ENCODE measurements at regions of chr3 and their contacts with region 1.

Region 1: DNA sequence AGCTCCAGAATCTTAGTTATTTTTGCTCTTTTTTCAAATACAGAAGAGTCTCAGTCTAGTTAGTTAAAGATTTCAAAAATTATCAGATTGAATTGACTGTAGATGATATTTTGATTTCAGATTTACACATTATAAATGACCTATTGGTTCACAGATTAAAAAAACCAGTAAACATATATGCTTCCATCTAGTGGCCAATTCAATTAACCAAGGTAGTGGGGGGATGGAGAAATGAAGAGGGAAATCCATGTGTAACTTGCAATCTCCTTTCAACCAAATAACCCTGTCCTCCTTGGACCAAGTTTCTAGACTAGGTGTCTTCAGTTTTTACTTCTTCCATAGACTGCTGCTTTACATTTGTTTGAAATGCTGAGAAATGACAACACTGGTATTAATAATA is 789.8 kb downstream of the ROBO1 start:
- DNase-seq: no peak
- ATAC-seq: peak; percentile 38; the same call in 1 of the 3 replicates
- H3K4me3 ChIP-seq: no peak overlapping the region
- H3K27ac ChIP-seq: no peak overlapping the region
- H3K4me1 ChIP-seq: no peaks in the 10 kb centered on the region
- H3K27me3 ChIP-seq: no peaks in the 10 kb centered on the region
- CTCF ChIP-seq: peak in 1 of 3 experiments; percentile 1; a peak in 1 of 6 replicates
- EP300 ChIP-seq: no peak
- POLR2A ChIP-seq: no peak
- RAD21 ChIP-seq: peak; percentile 10; the same call in 1 of the 2 replicates

Region 2: GRCh38 chr3:78659386-78659987 is 318.6 kb before region 1 on chr3:
- CTCF ChIA-PET with region 1: interaction called, 11 read pairs
- POLR2A ChIA-PET with region 1: no interaction called
- RAD21 ChIA-PET with region 1: interaction called, 4 read pairs
- SMC1A ChIA-PET with region 1: interaction called, 11 read pairs
- in situ Hi-C with region 1: no loop called
- intact Hi-C with region 1: no loop called
- DNase-seq: no peak
- ATAC-seq: peak; percentile 41
- H3K4me3 ChIP-seq: no peak overlapping the region
- H3K27ac ChIP-seq: no peak overlapping the region
- H3K4me1 ChIP-seq: no peaks in the 10 kb centered on the region
- H3K27me3 ChIP-seq: no peaks in the 10 kb centered on the region
- CTCF ChIP-seq: peak; percentile 29 to 61 (median 30); a peak in 5 of 6 replicates
- EP300 ChIP-seq: no peak
- POLR2A ChIP-seq: no peak
- RAD21 ChIP-seq: peak; percentile 80

Region 3: DNA sequence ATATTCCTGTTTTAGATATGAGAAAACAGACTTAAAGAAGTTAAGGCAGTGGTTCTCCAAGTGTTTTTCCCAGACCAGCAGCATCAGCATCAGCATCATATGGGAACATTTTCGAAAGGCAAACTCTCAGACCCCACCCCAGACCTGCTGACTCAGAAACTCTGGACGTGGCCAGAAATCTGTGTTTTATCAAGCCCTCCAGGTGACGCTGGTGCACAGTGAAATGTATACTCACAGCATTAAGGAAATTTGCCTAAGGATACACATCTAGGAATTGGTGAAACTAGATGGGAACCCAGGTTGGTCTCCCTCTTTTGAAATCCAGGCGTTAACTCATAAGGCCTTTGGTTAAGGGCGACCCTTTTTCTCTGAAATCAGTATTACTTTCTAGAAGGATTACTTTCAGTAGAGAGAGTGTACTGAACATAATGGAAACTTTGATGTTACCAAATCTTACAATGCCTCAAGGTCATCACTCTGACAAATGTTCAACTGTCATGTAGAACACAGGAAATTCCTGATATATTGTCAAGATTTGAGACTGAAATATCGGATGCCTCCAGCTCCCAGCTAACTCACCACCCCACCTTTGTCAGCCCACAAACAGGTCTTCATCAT is 120.4 kb before region 1 on chr3:
- CTCF ChIA-PET with region 1: interaction called, 4 read pairs
- POLR2A ChIA-PET with region 1: interaction called, 9 read pairs
- RAD21 ChIA-PET with region 1: interaction called, 6 read pairs
- SMC1A ChIA-PET with region 1: interaction called, 10 read pairs
- in situ Hi-C with region 1: no loop called
- intact Hi-C with region 1: no loop called
- DNase-seq: no peak
- ATAC-seq: peak; percentile 36; the same call in 1 of the 3 replicates
- H3K4me3 ChIP-seq: no peak overlapping the region
- H3K27ac ChIP-seq: no peak overlapping the region
- H3K4me1 ChIP-seq: no peaks in the 10 kb centered on the region
- H3K27me3 ChIP-seq: no peaks in the 10 kb centered on the region
- CTCF ChIP-seq: peak in 1 of 3 experiments; percentile 28; a peak in 2 of 6 replicates
- EP300 ChIP-seq: no peak
- POLR2A ChIP-seq: no peak
- RAD21 ChIP-seq: peak; percentile 28; the same call in 1 of the 2 replicates

Region 4: DNA sequence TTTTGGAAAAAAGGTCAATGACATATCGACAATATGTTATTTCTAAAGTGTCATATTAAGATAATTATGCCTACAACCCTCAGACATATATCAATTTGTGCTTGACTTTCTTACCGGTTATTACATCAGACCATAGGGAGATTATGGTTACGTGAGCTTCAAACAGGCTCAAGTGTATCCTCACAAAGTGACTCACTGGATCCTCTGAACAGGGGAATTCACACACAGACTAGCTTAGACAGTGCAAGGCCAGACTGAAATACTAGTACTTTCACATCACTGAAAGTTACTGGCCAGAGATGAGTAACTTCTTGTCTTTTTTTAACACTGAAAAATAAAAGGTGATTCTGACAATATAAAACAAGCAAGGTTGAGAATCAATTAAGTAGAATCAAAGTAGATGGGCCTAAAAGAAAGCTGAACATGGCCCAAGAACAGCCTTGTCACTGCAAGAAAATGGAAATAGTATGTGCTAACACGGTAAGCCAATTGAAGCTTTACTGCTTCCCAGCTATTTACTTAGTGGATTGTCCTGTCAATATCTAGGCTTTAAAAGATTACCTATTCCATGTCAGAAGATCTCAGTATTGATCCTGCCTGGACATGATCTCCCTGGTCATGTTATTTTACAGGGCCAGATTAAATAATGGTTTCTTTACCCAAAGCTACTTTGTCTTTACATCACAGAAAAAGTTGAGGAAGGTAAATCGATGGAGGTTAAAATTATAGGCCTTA is 58.8 kb before region 1 on chr3:
- CTCF ChIA-PET with region 1: no interaction called
- POLR2A ChIA-PET with region 1: interaction called, 3 read pairs
- RAD21 ChIA-PET with region 1: interaction called, 9 read pairs
- SMC1A ChIA-PET with region 1: interaction called, 29 read pairs
- in situ Hi-C with region 1: no loop called
- intact Hi-C with region 1: no loop called
- DNase-seq: peak; percentile 71
- ATAC-seq: peak; percentile 95
- H3K4me3 ChIP-seq: no peak overlapping the region
- H3K27ac ChIP-seq: peak overlapping the region; percentile 13; the same call in 1 of the 2 replicates
- H3K4me1 ChIP-seq: no peaks in the 10 kb centered on the region
- H3K27me3 ChIP-seq: no peaks in the 10 kb centered on the region
- CTCF ChIP-seq: no peak
- EP300 ChIP-seq: peak in 1 of 2 experiments; percentile 12; a peak in 1 of 4 replicates
- POLR2A ChIP-seq: no peak
- RAD21 ChIP-seq: no peak

Region 5: GRCh38 chr3:78988324-78988723 is 10.3 kb after region 1 on chr3:
- CTCF ChIA-PET with region 1: interaction called, 37 read pairs
- POLR2A ChIA-PET with region 1: no interaction called
- RAD21 ChIA-PET with region 1: interaction called, 19 read pairs
- SMC1A ChIA-PET with region 1: interaction called, 16 read pairs
- in situ Hi-C with region 1: no loop called
- intact Hi-C with region 1: no loop called
- DNase-seq: no peak
- ATAC-seq: no peak
- H3K4me3 ChIP-seq: no peak overlapping the region
- H3K27ac ChIP-seq: no peak overlapping the region
- H3K4me1 ChIP-seq: no peaks in the 10 kb centered on the region
- H3K27me3 ChIP-seq: no peaks in the 10 kb centered on the region
- CTCF ChIP-seq: peak in 1 of 3 experiments; percentile 32; a peak in 1 of 6 replicates
- EP300 ChIP-seq: no peak
- POLR2A ChIP-seq: no peak
- RAD21 ChIP-seq: peak; percentile 23

Region 6: GRCh38 chr3:79019137-79019923 is 41.3 kb after region 1 on chr3:
- CTCF ChIA-PET with region 1: interaction called, 3 read pairs
- POLR2A ChIA-PET with region 1: interaction called, 5 read pairs
- RAD21 ChIA-PET with region 1: interaction called, 8 read pairs
- SMC1A ChIA-PET with region 1: interaction called, 17 read pairs
- in situ Hi-C with region 1: no loop called
- intact Hi-C with region 1: no loop called
- DNase-seq: no peak
- ATAC-seq: peak; percentile 88
- H3K4me3 ChIP-seq: peak overlapping the region; percentile 27; the same call in 1 of the 2 replicates
- H3K27ac ChIP-seq: peak overlapping the region; percentile 69
- H3K4me1 ChIP-seq: no peaks in the 10 kb centered on the region
- H3K27me3 ChIP-seq: no peaks in the 10 kb centered on the region
- CTCF ChIP-seq: no peak
- EP300 ChIP-seq: no peak
- POLR2A ChIP-seq: 0 out of 2 replicates have a peak, but pooled peaks have one; percentile 37
- RAD21 ChIP-seq: no peak

Region 7: DNA sequence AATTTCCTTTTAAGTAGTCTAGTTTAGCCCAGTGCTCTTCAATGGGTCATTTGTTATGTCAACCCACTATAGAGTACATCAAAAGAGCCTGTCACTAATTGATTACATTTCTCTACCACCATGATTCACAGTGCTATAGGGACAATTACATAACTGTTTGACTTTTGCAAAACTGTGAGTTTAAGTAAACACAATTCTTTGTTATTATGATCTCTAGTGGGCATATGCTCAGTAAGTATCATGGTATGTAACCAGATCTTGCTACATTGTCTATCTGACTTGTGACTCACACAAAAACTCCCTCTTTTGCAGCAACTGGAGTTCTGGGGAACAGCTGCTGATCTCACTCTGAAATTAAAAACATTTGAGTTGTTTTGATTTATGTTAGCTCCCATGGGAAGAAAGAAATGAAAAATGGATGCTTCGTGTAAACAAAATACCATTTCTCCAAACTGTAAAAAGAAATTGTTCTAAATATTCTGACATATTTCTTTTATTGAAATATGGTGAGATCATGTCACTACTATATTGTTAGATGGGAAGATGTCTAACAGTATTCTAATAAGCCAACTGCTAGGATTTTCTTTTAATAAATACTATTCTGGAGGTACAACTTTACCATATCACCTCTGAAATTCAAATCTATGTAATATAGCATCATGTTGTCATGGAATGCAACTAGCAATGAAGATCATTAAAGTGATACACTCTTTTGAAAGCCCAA is 319.4 kb after region 1 on chr3:
- CTCF ChIA-PET with region 1: no interaction called
- POLR2A ChIA-PET with region 1: no interaction called
- RAD21 ChIA-PET with region 1: no interaction called
- SMC1A ChIA-PET with region 1: no interaction called
- in situ Hi-C with region 1: no loop called
- intact Hi-C with region 1: no loop called
- DNase-seq: no peak
- ATAC-seq: peak; percentile 79
- H3K4me3 ChIP-seq: no peak overlapping the region
- H3K27ac ChIP-seq: no peak overlapping the region
- H3K4me1 ChIP-seq: no peaks in the 10 kb centered on the region
- H3K27me3 ChIP-seq: no peaks in the 10 kb centered on the region
- CTCF ChIP-seq: no peak
- EP300 ChIP-seq: no peak
- POLR2A ChIP-seq: no peak
- RAD21 ChIP-seq: no peak